CD4-positive, alpha-beta T cell (primary cell): ENCODE measurements at regions of chr17 and their contacts with region 1.

Region 1: GRCh38 chr17:1055751-1056645 is 59.1 kb downstream of the TIMM22 start:
- DNase-seq: peak in 13 of 14 experiments; percentile 16 to 58 (median 26)
- ATAC-seq: peak; percentile 62
- H3K4me3 ChIP-seq: no peak overlapping the region
- H3K4me3 Mint-ChIP-seq: no peak overlapping the region
- H3K27ac ChIP-seq: no peak overlapping the region
- H3K27ac Mint-ChIP-seq: no peak overlapping the region
- H3K4me1 ChIP-seq: no peaks in the 10 kb centered on the region
- H3K4me1 Mint-ChIP-seq: no peaks in the 10 kb centered on the region
- H3K27me3 ChIP-seq: no peaks in the 10 kb centered on the region
- H3K27me3 Mint-ChIP-seq: no peaks in the 10 kb centered on the region
- CTCF ChIP-seq: peak; percentile 52

Region 2: GRCh38 chr17:143782-144281 is 912.2 kb before region 1 on chr17:
- CTCF ChIA-PET with region 1: no interaction called
- POLR2A ChIA-PET with region 1: no interaction called
- intact Hi-C with region 1: loop called in 1 of 2 experiments (anchors 2 kb)
- DNase-seq: peak; percentile 69 to 92 (median 84)
- ATAC-seq: peak; percentile 97
- H3K4me3 ChIP-seq: no peak overlapping the region
- H3K4me3 Mint-ChIP-seq: no peak overlapping the region
- H3K27ac ChIP-seq: no peak overlapping the region
- H3K27ac Mint-ChIP-seq: no peak overlapping the region
- H3K4me1 ChIP-seq: peaks cover 5% of the 10 kb centered on the region
- H3K4me1 Mint-ChIP-seq: no peaks in the 10 kb centered on the region
- H3K27me3 ChIP-seq: no peaks in the 10 kb centered on the region
- H3K27me3 Mint-ChIP-seq: no peaks in the 10 kb centered on the region
- CTCF ChIP-seq: peak; percentile 86

Region 3: GRCh38 chr17:688100-688989 is 367.7 kb before region 1 on chr17:
- CTCF ChIA-PET with region 1: no interaction called
- POLR2A ChIA-PET with region 1: no interaction called
- intact Hi-C with region 1: no loop called
- DNase-seq: peak in 3 of 14 experiments; percentile 16 to 45 (median 40)
- ATAC-seq: no peak
- H3K4me3 ChIP-seq: no peak overlapping the region
- H3K4me3 Mint-ChIP-seq: no peak overlapping the region
- H3K27ac ChIP-seq: no peak overlapping the region
- H3K27ac Mint-ChIP-seq: no peak overlapping the region
- H3K4me1 ChIP-seq: no peaks in the 10 kb centered on the region
- H3K4me1 Mint-ChIP-seq: peaks cover 7% of the 10 kb centered on the region
- H3K27me3 ChIP-seq: no peaks in the 10 kb centered on the region
- H3K27me3 Mint-ChIP-seq: no peaks in the 10 kb centered on the region
- CTCF ChIP-seq: no peak

Region 4: GRCh38 chr17:794876-795275 is 261.1 kb before region 1 on chr17:
- CTCF ChIA-PET with region 1: no interaction called
- POLR2A ChIA-PET with region 1: no interaction called
- intact Hi-C with region 1: loop called in 1 of 2 experiments (anchors 2 kb)
- DNase-seq: peak; percentile 14 to 68 (median 26)
- ATAC-seq: peak; percentile 77
- H3K4me3 ChIP-seq: no peak overlapping the region
- H3K4me3 Mint-ChIP-seq: peak overlapping the region; percentile 31
- H3K27ac ChIP-seq: no peak overlapping the region
- H3K27ac Mint-ChIP-seq: no peak overlapping the region
- H3K4me1 ChIP-seq: peaks cover 8% of the 10 kb centered on the region
- H3K4me1 Mint-ChIP-seq: peaks cover 6% of the 10 kb centered on the region
- H3K27me3 ChIP-seq: no peaks in the 10 kb centered on the region
- H3K27me3 Mint-ChIP-seq: no peaks in the 10 kb centered on the region
- CTCF ChIP-seq: peak; percentile 49

Region 5: DNA sequence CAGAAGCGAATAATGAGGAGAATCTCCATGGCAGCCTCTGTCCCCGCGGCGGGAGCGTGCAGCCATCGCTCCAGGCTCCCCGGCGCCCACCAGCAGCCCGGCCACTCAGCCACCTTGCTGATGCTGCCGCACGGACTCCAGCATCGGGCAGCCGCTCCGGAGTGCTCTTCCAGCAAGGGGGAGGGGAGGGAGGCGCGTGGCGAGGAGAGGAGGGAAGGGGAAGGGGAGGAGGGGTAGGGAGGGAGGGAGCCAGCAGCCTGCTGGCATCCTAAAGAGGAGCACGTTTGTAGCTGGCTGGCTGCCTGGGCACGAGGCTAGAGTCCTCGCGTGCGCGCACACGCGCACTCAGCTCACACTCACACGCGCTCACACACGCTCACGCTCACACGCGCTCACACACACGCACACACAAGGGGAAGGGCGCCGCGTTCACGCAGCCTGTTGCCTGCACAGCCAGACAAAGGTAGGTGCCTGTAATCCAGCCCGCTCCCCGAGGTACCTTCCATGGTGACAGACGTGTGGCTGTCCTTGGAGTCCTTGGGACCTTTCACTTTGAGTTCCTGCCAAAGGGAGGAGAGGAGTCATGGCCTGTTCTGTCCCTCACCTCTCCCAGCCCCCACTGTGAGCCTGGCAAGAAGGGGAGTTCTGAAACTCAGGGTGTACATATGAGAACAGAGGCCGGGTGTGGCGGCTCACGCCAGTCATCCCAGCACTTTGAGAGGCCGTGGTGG is 23.0 kb after region 1 on chr17:
- CTCF ChIA-PET with region 1: no interaction called
- POLR2A ChIA-PET with region 1: no interaction called
- intact Hi-C with region 1: no loop called
- DNase-seq: no peak
- ATAC-seq: no peak
- H3K4me3 ChIP-seq: no peak overlapping the region
- H3K4me3 Mint-ChIP-seq: no peak overlapping the region
- H3K27ac ChIP-seq: no peak overlapping the region
- H3K27ac Mint-ChIP-seq: no peak overlapping the region
- H3K4me1 ChIP-seq: no peaks in the 10 kb centered on the region
- H3K4me1 Mint-ChIP-seq: no peaks in the 10 kb centered on the region
- H3K27me3 ChIP-seq: no peaks in the 10 kb centered on the region
- H3K27me3 Mint-ChIP-seq: no peaks in the 10 kb centered on the region
- CTCF ChIP-seq: no peak

Region 6: DNA sequence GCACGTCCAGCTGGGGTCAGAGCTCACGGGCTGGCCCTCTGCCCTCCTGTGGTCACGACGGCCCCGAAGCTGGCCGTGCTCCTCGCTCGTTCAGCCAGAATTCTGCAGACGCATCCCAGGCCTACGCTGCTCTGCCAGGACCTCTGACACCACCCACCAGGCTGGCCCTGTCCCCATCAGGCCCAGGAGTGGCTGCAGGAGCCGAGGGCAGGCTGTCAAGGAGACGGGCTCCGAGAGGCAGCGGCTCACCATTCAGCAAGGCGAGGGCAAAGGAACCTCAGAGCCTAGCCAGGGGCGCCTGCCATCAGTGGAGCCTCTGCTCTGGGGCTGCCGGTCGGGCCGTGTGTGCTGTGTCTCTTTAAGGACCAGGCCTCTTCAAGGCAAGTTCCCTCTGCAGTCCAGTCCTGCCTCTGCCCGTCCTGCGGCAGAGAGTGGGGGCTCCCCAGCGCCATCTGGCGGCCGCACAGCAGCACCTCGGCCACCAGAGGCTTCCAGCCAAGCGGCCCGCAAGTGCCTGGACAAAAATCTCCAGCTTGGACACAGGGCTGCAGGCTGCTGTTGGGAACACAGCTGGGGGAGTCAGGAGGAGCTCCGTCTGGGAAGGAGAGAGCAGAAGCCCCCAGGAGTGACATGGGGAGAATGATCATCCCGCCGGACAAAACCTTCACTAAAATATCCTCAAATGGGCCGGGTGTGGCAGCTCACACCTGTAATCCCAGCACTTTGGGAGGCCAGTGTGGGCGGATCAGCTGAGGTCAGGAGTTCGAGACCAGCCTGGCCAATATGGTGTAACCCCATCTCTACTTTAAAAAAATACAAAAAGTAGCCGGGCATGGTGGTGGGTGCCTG is 131.1 kb after region 1 on chr17:
- CTCF ChIA-PET with region 1: interaction called, 3 read pairs
- POLR2A ChIA-PET with region 1: no interaction called
- intact Hi-C with region 1: loop called in 1 of 2 experiments (anchors 2 kb)
- DNase-seq: peak; percentile 57 to 88 (median 71)
- ATAC-seq: peak; percentile 97
- H3K4me3 ChIP-seq: no peak overlapping the region
- H3K4me3 Mint-ChIP-seq: no peak overlapping the region
- H3K27ac ChIP-seq: no peak overlapping the region
- H3K27ac Mint-ChIP-seq: no peak overlapping the region
- H3K4me1 ChIP-seq: peaks cover 18% of the 10 kb centered on the region
- H3K4me1 Mint-ChIP-seq: peaks cover 4% of the 10 kb centered on the region
- H3K27me3 ChIP-seq: no peaks in the 10 kb centered on the region
- H3K27me3 Mint-ChIP-seq: peaks cover 10% of the 10 kb centered on the region
- CTCF ChIP-seq: peak; percentile 96